CD4-positive, alpha-beta T cell (primary cell): ENCODE measurements at regions of chr14 and their contacts with region 1.

Region 1: DNA sequence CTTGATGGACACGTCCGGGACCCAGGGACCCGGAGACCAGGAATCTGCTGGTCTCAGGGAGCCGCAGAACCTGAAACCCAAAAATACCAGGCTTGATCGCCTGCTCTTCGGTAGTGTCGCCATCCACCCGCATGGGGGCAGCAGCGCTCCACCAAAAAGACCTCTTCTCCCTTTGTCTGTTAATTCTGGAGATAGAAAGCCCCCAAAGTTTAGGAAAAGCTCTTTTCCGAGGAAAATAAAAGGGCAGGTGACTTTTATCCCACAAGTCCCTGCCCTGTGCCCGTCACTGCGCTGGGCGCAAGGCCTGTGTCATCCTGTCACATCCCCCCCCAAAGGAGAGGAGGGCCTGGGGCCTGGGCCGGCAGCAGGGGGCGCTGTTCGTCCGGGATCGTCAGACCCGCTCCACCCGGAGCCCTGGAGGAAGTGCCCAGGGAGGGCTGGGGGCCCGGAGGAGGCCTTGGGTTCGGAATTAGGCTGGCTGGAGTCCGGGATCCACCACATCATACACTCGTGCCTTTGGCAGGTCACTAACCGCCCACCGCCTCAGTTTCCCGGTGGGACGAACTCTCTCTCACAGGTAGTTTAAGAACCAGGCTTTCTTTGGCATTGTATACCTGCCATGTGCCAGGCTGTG is 31.9 kb downstream of the DAD1 start:
- DNase-seq: peak; percentile 83 to 98 (median 92)
- ATAC-seq: peak; percentile 24
- H3K4me3 ChIP-seq: peak overlapping the region; percentile 58
- H3K4me3 Mint-ChIP-seq: peak overlapping the region; percentile 96
- H3K27ac ChIP-seq: peak overlapping the region; percentile 99
- H3K27ac Mint-ChIP-seq: peak overlapping the region; percentile 97
- H3K4me1 ChIP-seq: peaks cover 100% of the 10 kb centered on the region
- H3K4me1 Mint-ChIP-seq: peaks cover 93% of the 10 kb centered on the region
- H3K27me3 ChIP-seq: no peaks in the 10 kb centered on the region
- H3K27me3 Mint-ChIP-seq: peaks cover 6% of the 10 kb centered on the region
- CTCF ChIP-seq: peak; percentile 100

Region 2: DNA sequence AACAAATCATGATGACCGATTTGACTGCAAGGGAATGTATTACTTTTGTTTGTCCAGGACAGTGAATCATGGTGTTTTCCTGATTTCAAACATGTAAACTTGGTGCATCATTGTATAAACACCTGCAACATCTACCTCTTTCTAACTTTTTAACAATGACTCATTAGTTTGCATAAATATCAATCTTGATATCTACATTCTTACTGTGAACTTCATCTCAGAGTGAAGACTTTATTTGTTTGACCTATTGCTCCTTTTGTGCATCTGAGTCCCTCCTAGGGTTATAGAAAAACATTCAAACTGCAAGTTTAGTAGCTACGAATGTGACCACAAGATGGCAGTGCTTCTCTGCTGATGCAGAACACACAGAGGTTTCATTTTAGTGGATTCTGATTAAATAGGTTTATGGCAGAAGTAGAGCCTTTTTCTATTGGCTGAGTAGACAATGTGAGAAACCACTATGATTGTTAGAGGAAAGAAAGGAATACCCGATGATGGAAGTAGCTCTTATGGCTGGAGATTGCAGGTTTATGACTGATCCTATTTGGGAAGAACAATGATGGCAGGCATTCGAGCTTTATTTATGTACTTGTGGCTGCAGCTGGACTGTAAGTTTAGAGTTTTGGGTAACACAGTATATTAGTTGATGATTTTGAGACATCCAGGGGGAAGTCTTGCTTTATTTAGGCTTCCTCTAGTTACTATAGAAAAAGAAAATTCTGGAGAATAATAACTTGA is 639.2 kb before region 1 on chr14:
- CTCF ChIA-PET with region 1: interaction called, 8 read pairs
- POLR2A ChIA-PET with region 1: interaction called, 12 read pairs
- intact Hi-C with region 1: loop called (anchors 5 to 10 kb)
- DNase-seq: peak; percentile 17 to 84 (median 49)
- ATAC-seq: peak; percentile 66
- H3K4me3 ChIP-seq: peak overlapping the region; percentile 40
- H3K4me3 Mint-ChIP-seq: peak overlapping the region; percentile 80
- H3K27ac ChIP-seq: no peak overlapping the region
- H3K27ac Mint-ChIP-seq: peak overlapping the region; percentile 73
- H3K4me1 ChIP-seq: peaks cover 12% of the 10 kb centered on the region
- H3K4me1 Mint-ChIP-seq: peaks cover 69% of the 10 kb centered on the region
- H3K27me3 ChIP-seq: no peaks in the 10 kb centered on the region
- H3K27me3 Mint-ChIP-seq: no peaks in the 10 kb centered on the region
- CTCF ChIP-seq: peak; percentile 78

Region 3: DNA sequence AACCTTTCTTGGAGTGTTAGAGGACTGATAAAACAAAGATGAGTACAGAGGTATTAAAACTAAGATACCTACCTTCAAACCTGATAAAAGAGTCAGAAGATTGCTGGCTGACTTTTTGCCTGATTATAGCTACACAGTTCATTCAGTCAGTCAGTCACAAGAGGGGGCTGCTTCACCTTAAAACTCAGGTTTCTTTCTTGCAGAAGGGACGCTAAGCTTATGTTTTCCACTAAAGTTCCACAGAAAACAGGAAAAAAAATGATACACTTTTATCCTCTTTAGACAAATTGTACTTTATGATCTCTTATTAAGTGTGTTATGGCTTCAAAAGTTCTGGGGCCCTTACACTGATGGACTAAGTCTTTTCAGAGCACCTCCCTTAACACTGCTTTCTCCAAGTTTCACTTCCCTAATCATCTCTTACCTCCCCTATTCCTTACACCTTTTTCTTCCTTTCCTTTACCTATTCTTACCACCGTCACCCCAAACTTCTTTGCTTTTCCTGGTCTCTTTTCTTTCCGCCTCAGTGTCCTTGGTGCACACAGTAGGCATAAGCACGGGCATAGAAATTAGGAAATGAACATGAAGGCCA is 434.8 kb before region 1 on chr14:
- CTCF ChIA-PET with region 1: no interaction called
- POLR2A ChIA-PET with region 1: interaction called, 26 read pairs
- intact Hi-C with region 1: loop called (anchors 10 kb)
- DNase-seq: peak in 5 of 14 experiments; percentile 10 to 60 (median 41)
- ATAC-seq: peak; percentile 46
- H3K4me3 ChIP-seq: peak overlapping the region; percentile 45
- H3K4me3 Mint-ChIP-seq: peak overlapping the region; percentile 75
- H3K27ac ChIP-seq: peak overlapping the region in 1 of 2 donors; percentile 59
- H3K27ac Mint-ChIP-seq: peak overlapping the region; percentile 96
- H3K4me1 ChIP-seq: no peaks in the 10 kb centered on the region
- H3K4me1 Mint-ChIP-seq: peaks cover 21% of the 10 kb centered on the region
- H3K27me3 ChIP-seq: no peaks in the 10 kb centered on the region
- H3K27me3 Mint-ChIP-seq: no peaks in the 10 kb centered on the region
- CTCF ChIP-seq: no peak

Region 4: DNA sequence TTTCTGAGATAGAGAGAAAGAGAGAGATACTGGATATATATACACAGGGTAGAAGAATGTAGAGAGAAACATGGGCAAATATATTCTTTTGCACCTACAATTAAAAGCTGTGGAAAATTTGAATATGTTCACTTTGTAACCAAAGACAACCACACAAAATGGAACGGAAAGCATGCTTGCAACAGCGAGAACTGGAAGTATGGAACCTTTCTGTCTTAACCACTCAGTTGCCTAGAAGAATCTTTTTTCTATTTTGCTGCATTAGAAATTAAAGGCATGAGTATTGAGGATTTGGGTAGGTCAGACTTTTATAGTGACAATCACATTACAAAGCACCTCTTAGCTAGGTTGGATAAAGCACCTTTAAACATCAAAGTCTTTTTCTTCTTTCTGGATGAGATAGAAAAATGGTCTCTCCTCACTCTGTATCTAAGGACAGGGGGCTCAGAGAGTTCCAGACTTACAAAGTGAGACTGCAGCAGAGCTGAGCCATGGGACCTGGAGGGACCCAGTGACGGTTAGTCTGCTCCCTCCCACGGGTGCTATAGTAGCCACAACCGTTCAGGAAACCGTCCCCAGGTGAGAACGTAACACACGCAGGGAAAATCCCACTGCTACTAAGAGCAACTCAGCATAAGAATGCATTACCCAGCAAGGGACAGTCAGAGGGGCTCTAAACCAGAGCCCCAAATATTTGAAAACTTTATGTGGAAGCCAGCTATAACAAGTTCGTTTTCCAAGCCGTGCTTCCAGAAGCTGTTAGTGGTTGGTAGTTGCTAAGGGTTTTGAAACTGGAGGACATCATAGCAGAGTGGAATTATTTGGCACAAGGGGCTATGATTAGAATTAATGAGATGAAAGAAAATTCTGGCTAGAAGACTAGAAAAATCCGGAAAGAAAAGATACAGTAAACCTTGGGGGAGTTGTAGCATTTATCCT is 65.2 kb before region 1 on chr14:
- CTCF ChIA-PET with region 1: interaction called, 5 read pairs
- POLR2A ChIA-PET with region 1: interaction called, 613 read pairs
- intact Hi-C with region 1: no loop called
- DNase-seq: peak in 5 of 14 experiments; percentile 24 to 79 (median 53)
- ATAC-seq: peak; percentile 45
- H3K4me3 ChIP-seq: peak overlapping the region; percentile 61
- H3K4me3 Mint-ChIP-seq: peak overlapping the region; percentile 95
- H3K27ac ChIP-seq: peak overlapping the region; percentile 52 to 75
- H3K27ac Mint-ChIP-seq: peak overlapping the region; percentile 93
- H3K4me1 ChIP-seq: peaks cover 7% of the 10 kb centered on the region
- H3K4me1 Mint-ChIP-seq: peaks cover 67% of the 10 kb centered on the region
- H3K27me3 ChIP-seq: no peaks in the 10 kb centered on the region
- H3K27me3 Mint-ChIP-seq: no peaks in the 10 kb centered on the region
- CTCF ChIP-seq: no peak

Region 5: GRCh38 chr14:22570132-22570949 is 13.2 kb after region 1 on chr14:
- CTCF ChIA-PET with region 1: interaction called, 211 read pairs
- POLR2A ChIA-PET with region 1: interaction called, 218 read pairs
- intact Hi-C with region 1: loop called (anchors 1 kb)
- DNase-seq: peak; percentile 63 to 98 (median 80)
- ATAC-seq: peak; percentile 85
- H3K4me3 ChIP-seq: peak overlapping the region; percentile 45
- H3K4me3 Mint-ChIP-seq: peak overlapping the region; percentile 73
- H3K27ac ChIP-seq: peak overlapping the region; percentile 79 to 92
- H3K27ac Mint-ChIP-seq: peak overlapping the region; percentile 97
- H3K4me1 ChIP-seq: peaks cover 43% of the 10 kb centered on the region
- H3K4me1 Mint-ChIP-seq: peaks cover 71% of the 10 kb centered on the region
- H3K27me3 ChIP-seq: no peaks in the 10 kb centered on the region
- H3K27me3 Mint-ChIP-seq: no peaks in the 10 kb centered on the region
- CTCF ChIP-seq: peak; percentile 92

Region 6: DNA sequence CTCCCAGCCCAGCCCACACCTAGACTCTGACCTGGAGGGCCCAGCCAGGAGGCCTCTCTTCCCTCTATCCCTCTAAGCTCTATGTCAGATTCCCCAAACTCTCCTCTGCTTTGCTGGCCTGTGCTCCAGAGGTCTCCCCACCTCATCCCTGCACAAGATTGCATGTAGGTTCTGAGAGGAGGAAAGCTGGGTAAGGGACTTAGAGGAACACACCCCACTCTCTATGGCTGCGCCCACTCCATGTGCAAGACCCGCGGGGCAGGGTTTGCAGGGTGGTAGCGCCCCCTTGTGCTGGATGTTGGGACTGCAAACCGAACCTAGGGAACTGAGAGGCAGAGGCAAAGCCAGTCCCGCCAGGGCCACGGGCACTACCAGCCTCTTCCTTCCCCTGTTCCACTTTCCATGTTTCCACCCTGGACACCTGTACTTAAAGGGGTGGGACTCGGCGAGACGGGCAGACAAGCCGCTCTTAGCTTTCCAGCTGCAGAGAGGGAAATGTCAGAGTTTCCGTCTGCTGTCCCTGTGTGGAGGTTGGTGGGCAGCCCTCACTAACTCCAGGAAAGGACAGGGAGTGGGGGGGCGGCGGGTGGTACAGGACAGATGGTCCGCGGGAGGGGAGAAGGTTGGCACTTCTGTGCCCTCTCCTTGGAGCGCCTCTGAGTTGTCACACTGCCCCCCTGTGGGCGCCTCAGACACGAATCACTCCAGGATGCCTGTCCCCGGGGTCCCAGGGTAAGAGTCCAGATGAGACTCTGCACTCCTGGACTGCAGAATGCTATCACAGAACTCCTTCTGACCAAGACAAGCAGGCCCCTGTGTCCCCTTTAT is 296.0 kb after region 1 on chr14:
- CTCF ChIA-PET with region 1: interaction called, 16 read pairs
- POLR2A ChIA-PET with region 1: interaction called, 6 read pairs
- intact Hi-C with region 1: loop called (anchors 1 kb)
- DNase-seq: peak; percentile 81 to 96 (median 90)
- ATAC-seq: peak; percentile 91
- H3K4me3 ChIP-seq: peak overlapping the region; percentile 69
- H3K4me3 Mint-ChIP-seq: peak overlapping the region; percentile 83
- H3K27ac ChIP-seq: no peak overlapping the region
- H3K27ac Mint-ChIP-seq: peak overlapping the region; percentile 61
- H3K4me1 ChIP-seq: peaks cover 18% of the 10 kb centered on the region
- H3K4me1 Mint-ChIP-seq: peaks cover 27% of the 10 kb centered on the region
- H3K27me3 ChIP-seq: no peaks in the 10 kb centered on the region
- H3K27me3 Mint-ChIP-seq: peaks cover 5% of the 10 kb centered on the region
- CTCF ChIP-seq: peak; percentile 99